ENCODE measurements at regions of chr5 and their contacts with region 1.

Region 1: DNA sequence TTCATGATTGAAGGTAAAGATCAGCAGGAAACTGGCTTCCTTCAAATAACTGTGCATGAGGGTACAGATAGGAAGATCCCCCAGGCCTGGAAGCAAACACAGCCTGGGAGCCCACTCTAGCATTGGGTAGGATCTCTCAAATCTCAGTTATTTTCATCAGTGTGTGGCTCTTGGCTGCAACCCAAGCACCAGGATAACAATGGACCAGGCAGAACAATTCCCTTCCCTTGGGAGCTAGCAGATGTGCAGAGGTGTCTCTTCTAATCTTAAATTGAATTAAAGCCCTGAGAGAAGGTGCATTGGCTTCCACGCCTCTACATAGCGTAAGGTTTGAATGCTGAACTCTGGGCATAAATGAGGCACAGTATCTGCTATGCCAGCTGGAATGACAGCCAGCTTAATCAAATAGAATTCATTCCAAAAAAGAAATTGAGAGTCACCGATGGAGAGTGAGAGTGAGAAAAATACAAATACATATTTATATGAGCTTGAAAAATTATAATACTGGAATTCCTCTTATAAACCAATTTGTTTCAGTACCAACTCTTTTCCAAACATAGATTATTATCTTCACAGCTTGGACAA is 957.3 kb downstream of the CDH12 start:
- DNase-seq: no peak
- H3K4me3 ChIP-seq: no peak overlapping the region
- H3K27ac ChIP-seq: no peak overlapping the region
- H3K4me1 ChIP-seq: no peaks in the 10 kb centered on the region
- H3K27me3 ChIP-seq: no peaks in the 10 kb centered on the region
- CTCF ChIP-seq: no peak
- EP300 ChIP-seq: no peak
- POLR2A ChIP-seq: no peak
- RAD21 ChIP-seq: no peak

Region 2: DNA sequence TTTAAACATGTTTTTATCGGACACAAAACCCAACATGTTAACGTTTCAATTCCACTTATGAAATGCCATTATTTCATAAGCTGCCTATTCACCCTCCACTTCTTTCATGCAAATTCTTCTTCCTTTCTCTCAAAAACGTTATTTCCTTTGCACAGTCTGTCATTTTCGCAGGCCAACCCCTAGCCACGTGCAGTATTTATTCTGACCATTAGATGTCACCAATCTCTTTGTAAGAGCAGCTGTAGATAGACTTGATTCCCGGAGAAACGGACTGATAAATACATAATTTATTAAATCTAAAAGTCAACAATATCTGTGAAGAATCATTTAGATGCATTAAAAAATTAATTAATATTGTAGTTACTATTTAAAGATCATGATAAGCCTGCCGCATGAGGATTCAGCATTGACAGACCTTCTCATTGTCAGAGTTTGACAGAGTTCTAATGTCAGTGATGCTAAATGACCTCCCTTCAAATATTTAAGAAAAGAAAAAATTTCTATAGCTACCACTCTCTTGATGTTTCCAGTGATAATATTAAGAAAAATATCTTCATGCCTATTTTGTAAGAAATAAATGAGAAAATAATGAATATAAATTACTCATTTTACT is 23.7 kb after region 1 on chr5:
- CTCF ChIA-PET with region 1: interaction called, 12 read pairs
- POLR2A ChIA-PET with region 1: no interaction called
- DNase-seq: no peak
- H3K4me3 ChIP-seq: no peak overlapping the region
- H3K27ac ChIP-seq: no peak overlapping the region
- H3K4me1 ChIP-seq: no peaks in the 10 kb centered on the region
- H3K27me3 ChIP-seq: no peaks in the 10 kb centered on the region
- CTCF ChIP-seq: peak in 2 of 3 experiments; percentile 56 to 66; a peak in 3 of 4 replicates
- EP300 ChIP-seq: no peak
- POLR2A ChIP-seq: no peak
- RAD21 ChIP-seq: peak; percentile 85 to 86

Measured in H1 (cell line).